ENCODE measurements at regions of chr12 and their contacts with region 1.

Region 1: GRCh38 chr12:125183187-125184067 is 118.2 kb downstream of the AACS start:
- DNase-seq: peak; percentile 68
- H3K4me3 Mint-ChIP-seq: no peak overlapping the region
- H3K27ac Mint-ChIP-seq: no peak overlapping the region
- H3K4me1 Mint-ChIP-seq: peaks cover 6% of the 10 kb centered on the region
- H3K27me3 Mint-ChIP-seq: peaks cover 32% of the 10 kb centered on the region

Region 2: DNA sequence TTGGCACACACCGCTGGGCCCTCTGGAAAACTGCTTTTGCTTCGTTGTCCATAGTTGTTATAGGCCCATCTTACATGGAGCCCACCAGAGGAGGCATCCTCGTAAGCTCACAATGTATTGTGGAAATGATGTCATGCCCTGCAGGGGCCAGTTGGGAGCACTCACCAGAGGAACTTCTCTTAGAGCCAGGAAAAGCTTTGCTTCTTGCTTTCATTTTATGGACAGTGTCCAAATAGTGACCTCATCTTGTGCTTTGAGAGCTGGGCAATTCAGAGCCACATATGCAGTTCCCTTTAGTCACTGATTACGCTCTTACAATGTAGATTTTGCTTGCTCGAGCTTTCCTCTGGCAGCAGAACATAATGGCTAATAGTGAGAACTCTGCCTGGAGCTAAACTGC is 157.4 kb after region 1 on chr12:
- intact Hi-C with region 1: loop called (anchors 10 kb)
- DNase-seq: no peak
- H3K4me3 Mint-ChIP-seq: no peak overlapping the region
- H3K27ac Mint-ChIP-seq: no peak overlapping the region
- H3K4me1 Mint-ChIP-seq: no peaks in the 10 kb centered on the region
- H3K27me3 Mint-ChIP-seq: peaks cover 7% of the 10 kb centered on the region

Region 3: DNA sequence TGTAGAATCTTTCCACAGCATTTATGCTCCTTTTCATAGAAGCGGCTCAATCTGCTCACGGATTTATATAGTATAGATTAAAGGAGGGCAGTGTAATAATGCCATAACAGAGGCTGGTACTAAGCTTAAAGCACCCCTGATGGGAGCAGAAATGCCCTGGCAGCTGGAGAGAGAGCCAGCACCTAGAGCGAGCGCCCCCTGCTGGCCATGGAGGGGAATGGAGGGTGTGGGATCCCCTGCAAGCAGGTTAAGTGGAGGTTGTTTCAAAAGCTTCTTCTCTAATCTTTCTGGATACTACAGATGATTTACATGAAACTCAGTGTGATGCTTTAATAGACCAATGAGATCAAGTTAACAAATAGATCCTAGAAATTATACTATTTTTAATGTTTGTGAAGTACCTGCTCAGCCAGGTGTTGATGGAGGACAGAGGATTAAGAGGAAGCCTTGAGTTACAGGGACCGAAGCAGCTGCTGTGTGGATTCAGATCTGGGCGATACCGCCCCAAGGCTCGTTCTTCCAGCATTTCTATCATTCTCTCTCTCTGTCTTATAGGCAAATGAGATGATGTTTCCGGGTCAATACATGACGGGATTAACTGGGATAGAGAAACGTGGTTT is 1564.2 kb after region 1 on chr12:
- intact Hi-C with region 1: loop called (anchors 5 kb)
- DNase-seq: peak; percentile 14
- H3K4me3 Mint-ChIP-seq: no peak overlapping the region
- H3K27ac Mint-ChIP-seq: no peak overlapping the region
- H3K4me1 Mint-ChIP-seq: no peaks in the 10 kb centered on the region
- H3K27me3 Mint-ChIP-seq: peaks cover 6% of the 10 kb centered on the region

Measured in activated T-helper 1 cell treated with anti-CD3 and anti-CD28 coated beads, Interleukin-12 subunit alpha, Interleukin-12 subunit beta, Interleukin-2, Interleukin-4 antibody, amounts not matched to agents 30 ng/mL and 10 ng/mL and 1 ng/mL, durations not matched to agents 14 hours and 24 hours and 36 hours (primary cell).